ENCODE measurements at regions of chr2 and their contacts with region 1.

Region 1: GRCh38 chr2:189024901-189025618 is 50.9 kb downstream of the COL3A1 start:
- ATAC-seq: peak in 2 of 8 experiments; percentile 13 to 21
- H3K4me3 ChIP-seq: no peak overlapping the region
- H3K27ac ChIP-seq: no peak overlapping the region
- H3K4me1 ChIP-seq: no peaks in the 10 kb centered on the region

Region 2: GRCh38 chr2:188931361-188931760 is 93.7 kb before region 1 on chr2:
- in situ Hi-C with region 1: no loop called
- ATAC-seq: no peak
- H3K4me3 ChIP-seq: no peak overlapping the region
- H3K27ac ChIP-seq: no peak overlapping the region
- H3K4me1 ChIP-seq: no peaks in the 10 kb centered on the region

Region 3: GRCh38 chr2:189412330-189412953 is 387.4 kb after region 1 on chr2:
- in situ Hi-C with region 1: loop called in 1 of 9 experiments (anchors 25 kb)
- ATAC-seq: peak in 4 of 8 experiments; percentile 32 to 62 (median 36)
- H3K4me3 ChIP-seq: no peak overlapping the region
- H3K27ac ChIP-seq: no peak overlapping the region
- H3K4me1 ChIP-seq: no peaks in the 10 kb centered on the region

Measured in motor neuron (in vitro differentiated cells).